AG04449 (cell line): ENCODE measurements at regions of chr4 and their contacts with region 1.

Region 1: DNA sequence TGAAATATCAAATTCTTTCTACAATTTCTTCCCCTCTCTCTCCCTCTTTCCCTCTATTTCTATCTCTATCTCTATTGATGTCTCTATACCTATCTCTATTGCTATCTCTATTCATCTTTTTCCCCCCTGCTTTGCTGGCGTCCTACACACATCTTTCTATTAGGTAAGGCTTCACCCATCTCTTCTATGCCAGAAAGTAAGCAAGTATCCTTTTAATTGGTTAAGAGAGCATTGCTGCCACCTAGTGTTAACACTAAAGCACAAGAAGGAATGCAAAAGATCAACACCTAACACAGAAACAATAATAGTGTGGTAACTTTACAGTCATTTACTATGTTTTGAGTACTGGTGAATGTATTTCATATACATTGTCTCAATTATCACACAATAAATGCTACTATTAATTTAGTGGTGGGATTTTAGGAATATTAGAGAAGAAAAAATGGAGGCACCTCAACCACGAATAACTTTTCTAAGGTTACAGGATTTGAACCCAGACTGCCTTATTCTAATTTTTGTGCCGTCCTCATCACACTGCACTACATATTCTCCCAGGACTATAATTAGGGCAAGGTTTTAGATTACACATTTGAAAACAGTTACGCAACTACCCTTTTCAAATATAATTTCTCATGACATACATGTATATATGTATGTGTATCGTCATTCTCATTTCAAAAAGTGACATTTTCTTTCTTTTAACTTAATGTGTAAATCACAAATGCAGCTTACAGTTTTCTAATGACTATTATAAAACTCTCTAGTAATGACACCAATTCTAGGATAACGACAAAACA is 3.7 kb upstream of the C4orf36 start:
- DNase-seq: peak; percentile 34
- H3K4me3 ChIP-seq: no peak overlapping the region
- CTCF ChIP-seq: peak; percentile 55

Region 2: GRCh38 chr4:86522349-86522748 is 373.5 kb before region 1 on chr4:
- CTCF ChIA-PET with region 1: interaction called, 15 read pairs
- POLR2A ChIA-PET with region 1: no interaction called
- DNase-seq: no peak
- H3K4me3 ChIP-seq: no peak overlapping the region
- CTCF ChIP-seq: no peak

Region 3: GRCh38 chr4:87235020-87235671 is 339.3 kb after region 1 on chr4:
- CTCF ChIA-PET with region 1: no interaction called
- POLR2A ChIA-PET with region 1: no interaction called
- DNase-seq: no peak
- H3K4me3 ChIP-seq: peak overlapping the region; percentile 58
- CTCF ChIP-seq: no peak